Gastrocnemius medialis (tissue), 4 donors: ENCODE measurements at regions of chrX and their contacts with region 1.

Region 1: GRCh38 chrX:114959729-114960128 is 57.7 kb downstream of the IL13RA2 start:
- DNase-seq: no peak
- ATAC-seq: no peak
- H3K4me3 ChIP-seq: no peak overlapping the region
- H3K27ac ChIP-seq: no peak overlapping the region
- H3K4me1 ChIP-seq: no peaks in the 10 kb centered on the region
- H3K27me3 ChIP-seq: no peaks in the 10 kb centered on the region
- CTCF ChIP-seq: no peak
- POLR2A ChIP-seq: no peak

Region 2: DNA sequence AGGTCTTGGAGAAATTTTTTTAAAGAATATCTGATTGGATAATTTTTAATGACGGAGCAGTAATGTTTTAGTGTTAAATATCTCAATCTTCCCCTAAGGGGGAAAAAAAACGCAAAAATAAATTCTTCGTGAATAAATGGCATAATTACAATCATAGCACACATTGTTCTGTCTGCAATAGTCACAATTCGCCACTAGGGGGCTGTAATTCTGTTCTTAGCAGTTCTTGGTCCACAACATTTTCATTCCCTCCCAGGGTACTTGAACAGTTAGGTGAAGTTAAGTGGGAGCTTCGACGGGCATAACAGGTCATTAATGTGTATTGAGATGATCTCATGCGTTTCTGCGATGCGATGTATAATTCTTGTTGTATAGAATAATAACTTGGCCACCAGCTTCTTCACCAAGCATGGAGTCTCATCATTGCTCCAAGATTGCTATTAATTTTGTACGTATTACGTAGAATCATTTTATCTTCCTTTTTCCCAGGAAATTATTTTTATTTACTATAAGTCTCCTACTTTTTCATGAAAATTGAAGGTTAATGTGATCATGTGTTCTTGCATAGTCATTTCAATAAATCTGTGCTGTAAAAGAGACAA is 348.6 kb before region 1 on chrX:
- in situ Hi-C with region 1: loop called in 1 of 4 experiments (anchors 25 kb)
- intact Hi-C with region 1: no loop called
- DNase-seq: no peak
- ATAC-seq: no peak
- H3K4me3 ChIP-seq: no peak overlapping the region
- H3K27ac ChIP-seq: no peak overlapping the region
- H3K4me1 ChIP-seq: no peaks in the 10 kb centered on the region
- H3K27me3 ChIP-seq: peaks cover 0 to 3% (median 0%) of the 10 kb centered on the region in 3 donors
- CTCF ChIP-seq: peak in 3 of 5 experiments; percentile 32 to 67 (median 48)
- POLR2A ChIP-seq: no peak

Region 3: GRCh38 chrX:114626323-114626722 is 333.4 kb before region 1 on chrX:
- in situ Hi-C with region 1: loop called in 2 of 4 experiments (anchors 25 kb)
- intact Hi-C with region 1: no loop called
- DNase-seq: no peak
- ATAC-seq: no peak
- H3K4me3 ChIP-seq: no peak overlapping the region
- H3K27ac ChIP-seq: no peak overlapping the region
- H3K4me1 ChIP-seq: no peaks in the 10 kb centered on the region
- H3K27me3 ChIP-seq: no peaks in the 10 kb centered on the region
- CTCF ChIP-seq: peak in 1 of 5 experiments; percentile 26
- POLR2A ChIP-seq: no peak

Region 4: GRCh38 chrX:115018037-115018647 is 58.4 kb after region 1 on chrX:
- in situ Hi-C with region 1: no loop called
- intact Hi-C with region 1: no loop called
- DNase-seq: no peak
- ATAC-seq: no peak
- H3K4me3 ChIP-seq: no peak overlapping the region
- H3K27ac ChIP-seq: no peak overlapping the region
- H3K4me1 ChIP-seq: no peaks in the 10 kb centered on the region
- H3K27me3 ChIP-seq: peaks cover 0 to 8% (median 0%) of the 10 kb centered on the region in 3 donors
- CTCF ChIP-seq: no peak
- POLR2A ChIP-seq: no peak

Region 5: GRCh38 chrX:115204040-115204439 is 244.3 kb after region 1 on chrX:
- in situ Hi-C with region 1: no loop called
- intact Hi-C with region 1: no loop called
- DNase-seq: no peak
- ATAC-seq: no peak
- H3K4me3 ChIP-seq: no peak overlapping the region
- H3K27ac ChIP-seq: no peak overlapping the region
- H3K4me1 ChIP-seq: no peaks in the 10 kb centered on the region
- H3K27me3 ChIP-seq: no peaks in the 10 kb centered on the region
- CTCF ChIP-seq: no peak
- POLR2A ChIP-seq: no peak

Region 6: DNA sequence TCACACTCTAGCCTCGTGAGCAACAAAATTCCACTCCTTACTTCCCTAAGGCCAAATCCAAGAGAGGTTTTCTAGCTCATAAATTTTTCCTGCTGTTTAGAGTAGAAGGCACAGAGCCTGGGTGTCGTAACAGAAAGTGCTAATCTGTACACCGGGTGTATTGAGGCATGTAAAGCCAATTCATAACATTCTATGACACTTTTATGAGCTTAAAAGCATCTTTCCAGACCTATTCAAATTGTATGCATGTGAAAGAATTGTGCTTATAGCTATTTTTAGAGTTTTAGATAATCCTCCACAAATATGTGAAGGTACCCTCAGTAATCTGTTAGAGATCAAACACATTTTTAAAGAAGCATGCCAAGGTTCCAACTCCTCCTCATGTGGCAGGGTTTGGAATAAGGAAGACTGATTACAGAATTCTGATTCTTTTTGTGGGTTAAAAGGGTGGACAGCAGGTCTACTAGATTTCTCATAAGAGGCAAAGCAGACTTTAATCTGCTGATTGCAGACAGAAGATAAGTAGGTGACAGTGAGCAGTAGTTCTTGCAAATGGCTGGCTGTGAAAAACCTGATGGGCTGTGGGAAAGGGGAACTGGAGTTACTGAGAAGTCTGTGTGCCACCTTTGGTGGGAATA is 299.6 kb after region 1 on chrX:
- in situ Hi-C with region 1: no loop called
- intact Hi-C with region 1: no loop called
- DNase-seq: no peak
- ATAC-seq: no peak
- H3K4me3 ChIP-seq: no peak overlapping the region
- H3K27ac ChIP-seq: no peak overlapping the region
- H3K4me1 ChIP-seq: no peaks in the 10 kb centered on the region
- H3K27me3 ChIP-seq: peaks cover 0 to 6% (median 0%) of the 10 kb centered on the region in 3 donors
- CTCF ChIP-seq: no peak
- POLR2A ChIP-seq: no peak